ENCODE measurements at regions of chr2 and their contacts with region 1.

Region 1: DNA sequence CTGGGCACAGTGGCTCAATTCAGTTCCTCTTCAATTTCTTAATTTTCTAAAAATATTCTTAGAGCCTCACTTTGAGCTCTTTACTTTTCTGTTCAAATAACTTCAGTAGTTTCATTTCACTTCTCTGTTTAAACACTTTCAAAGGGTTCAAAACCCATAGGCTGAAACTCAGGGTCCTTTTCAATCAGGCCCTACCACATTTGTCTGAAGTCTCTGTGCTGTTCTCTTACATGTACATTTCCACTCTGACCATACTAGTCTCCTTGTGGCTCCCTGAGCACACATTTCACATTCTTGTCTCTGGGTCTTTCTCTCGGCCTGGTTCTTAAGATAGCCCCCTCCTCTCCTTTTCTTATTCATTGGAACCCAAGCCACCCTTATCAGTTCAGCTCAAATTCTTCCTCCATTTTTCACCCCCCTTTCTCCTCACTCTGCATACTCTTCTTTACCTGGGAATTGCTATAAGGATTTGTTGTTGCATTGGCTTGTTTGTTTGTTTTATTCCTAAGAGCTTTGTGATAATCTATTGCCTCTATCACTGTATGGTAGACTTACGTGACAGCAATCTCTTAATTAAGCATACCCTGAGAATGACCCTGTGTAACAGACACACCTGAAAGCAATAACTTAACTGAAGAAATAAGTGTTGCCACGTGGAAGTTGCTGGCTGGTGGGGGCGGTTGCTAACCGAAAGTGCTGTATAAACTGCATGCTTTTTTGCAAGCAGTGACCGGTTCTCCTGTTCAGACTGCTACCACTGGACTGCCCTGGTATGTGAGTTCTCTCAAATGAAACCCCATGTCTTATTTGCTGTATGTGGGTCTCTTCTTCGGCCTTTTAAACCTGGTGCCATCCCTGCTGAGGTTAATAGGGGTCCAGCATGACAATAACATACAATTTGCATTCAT is 27.7 kb upstream of the ACADL start:
- DNase-seq: no peak
- ATAC-seq: no peak

Region 2: DNA sequence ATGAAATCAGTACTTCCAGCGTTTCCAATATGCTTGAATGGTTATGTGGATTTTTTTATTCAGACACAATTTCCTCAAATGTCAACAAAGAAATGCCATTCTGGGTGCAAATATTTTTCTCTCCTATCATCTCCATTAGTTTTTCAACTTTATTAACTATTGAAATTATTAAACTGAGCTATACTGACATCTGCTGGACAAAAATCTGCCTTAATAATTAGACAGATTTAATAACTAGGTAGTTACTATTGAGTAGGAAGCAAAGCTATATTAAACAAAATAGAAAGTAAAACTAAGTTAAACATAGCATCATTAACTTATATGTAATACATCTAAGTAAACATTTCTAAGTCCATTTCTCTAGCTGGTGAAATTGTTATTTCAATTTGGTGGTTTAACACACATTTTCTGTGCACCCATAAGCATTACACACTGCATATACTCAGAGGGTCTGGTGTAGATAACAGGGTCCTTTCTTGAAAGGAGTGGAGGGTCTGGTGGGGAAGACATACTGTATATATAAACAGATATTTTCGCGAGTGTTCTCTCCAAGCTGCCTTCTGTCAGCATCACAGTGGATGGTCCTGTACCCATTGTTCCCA is 146.6 kb after region 1 on chr2:
- intact Hi-C with region 1: loop called (anchors 2 to 5 kb)
- DNase-seq: no peak
- ATAC-seq: no peak

Region 3: GRCh38 chr2:210707900-210708299 is 454.9 kb after region 1 on chr2:
- intact Hi-C with region 1: no loop called
- DNase-seq: no peak
- ATAC-seq: no peak